ENCODE measurements at regions of chr7 and their contacts with region 1.

Region 1: DNA sequence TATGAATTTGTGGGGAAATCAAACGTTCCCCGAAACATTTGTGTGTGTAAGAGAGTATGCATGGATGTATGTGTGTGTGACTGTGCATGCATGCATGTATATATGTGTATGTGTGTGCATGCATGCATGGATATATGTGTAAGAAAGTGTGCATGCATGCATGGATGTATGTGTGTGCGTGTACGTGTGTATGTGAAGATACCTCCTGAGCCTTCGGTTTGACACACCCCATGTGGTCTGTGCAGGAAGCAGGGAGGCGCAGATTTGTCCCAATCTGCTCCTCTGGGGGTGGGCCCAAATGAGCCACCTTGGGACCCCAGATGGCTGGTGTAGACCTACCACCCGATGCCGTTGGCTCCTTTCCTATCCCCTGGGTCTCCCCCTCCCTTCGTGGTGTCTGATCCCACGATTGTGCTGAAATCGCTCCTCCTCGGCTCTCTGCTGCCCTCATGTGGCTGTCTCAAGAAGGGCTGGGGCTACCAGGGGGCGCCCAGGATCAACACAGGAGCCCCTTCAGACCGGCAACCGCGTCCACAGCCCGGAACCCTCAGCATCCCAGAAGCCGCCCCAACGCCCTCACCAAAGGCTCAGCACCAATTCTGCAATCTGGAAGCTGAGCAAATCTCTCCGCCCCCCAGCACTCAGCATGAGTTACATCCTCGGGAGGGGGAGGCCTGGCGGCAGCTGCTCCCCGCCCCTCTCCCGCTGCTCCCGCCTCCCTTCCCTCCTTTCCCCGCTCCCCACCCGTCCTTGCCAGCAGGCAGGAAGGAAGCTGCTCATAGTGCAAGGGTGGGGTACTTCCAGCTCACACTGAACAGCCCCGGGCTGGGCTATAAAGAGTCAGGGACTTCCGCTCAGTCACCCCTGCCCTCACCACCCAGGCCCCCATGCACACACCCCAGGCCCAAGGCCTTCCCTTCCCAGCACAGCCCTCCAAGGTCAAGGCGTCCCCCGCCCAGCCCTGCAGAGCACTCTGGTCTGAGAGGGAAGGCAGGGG is 2.3 kb upstream of the NOS3 start:
- DNase-seq: no peak
- ATAC-seq: peak; percentile 52

Region 2: DNA sequence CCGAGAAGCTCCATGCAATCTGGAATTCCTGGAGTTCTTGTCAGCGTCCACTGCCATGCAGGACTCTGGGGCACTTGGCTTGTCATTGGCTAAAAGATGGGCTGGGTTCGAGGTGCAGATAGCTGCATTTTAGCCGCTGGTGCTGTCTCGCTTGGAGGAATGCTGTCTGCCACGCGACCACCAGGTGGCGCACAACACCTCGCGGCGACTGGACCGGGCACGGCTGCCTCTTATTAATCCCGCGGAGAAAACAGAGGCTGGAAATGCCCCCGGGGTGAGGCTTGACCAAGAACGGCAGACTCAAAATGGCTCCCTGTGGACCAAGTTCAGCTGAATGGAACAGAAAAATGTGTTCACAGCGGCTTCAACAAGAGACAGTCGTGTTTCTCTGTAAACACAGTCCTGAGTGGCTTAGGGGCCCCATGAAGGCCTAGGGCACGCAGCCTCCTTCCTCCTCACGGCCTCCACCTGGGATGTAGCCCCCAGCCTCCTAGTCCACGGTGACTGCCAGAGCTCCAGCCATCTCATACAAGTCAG is 90.0 kb before region 1 on chr7:
- intact Hi-C with region 1: loop called (anchors 5 kb)
- DNase-seq: peak; percentile 89
- ATAC-seq: peak; percentile 86

Region 3: DNA sequence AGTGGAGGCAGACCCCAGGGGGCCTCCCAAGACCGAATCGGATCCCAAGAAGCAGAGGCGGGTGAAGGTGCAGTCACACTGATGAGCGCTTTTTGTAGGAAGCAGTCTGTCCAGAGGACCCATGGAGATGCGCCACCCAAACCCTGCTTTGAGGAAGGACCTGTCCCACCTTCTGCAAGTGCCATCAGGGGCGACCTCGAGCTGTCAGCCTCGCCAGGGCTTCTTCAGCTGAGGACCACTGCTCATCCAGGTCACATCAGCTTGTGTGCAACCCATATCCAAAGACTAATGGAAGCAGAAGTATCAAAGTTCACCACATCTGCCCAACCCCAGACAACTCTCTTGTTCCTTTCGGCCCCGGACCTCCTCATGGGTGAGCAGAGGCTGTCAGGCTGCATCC is 71.9 kb before region 1 on chr7:
- intact Hi-C with region 1: no loop called
- DNase-seq: no peak
- ATAC-seq: no peak